ENCODE measurements at regions of chr1 and their contacts with region 1.

Region 1: GRCh38 chr1:93659822-93660503 is 21.7 kb downstream of the BCAR3 start:
- DNase-seq: no peak
- ATAC-seq: no peak
- H3K4me3 ChIP-seq: no peak overlapping the region
- H3K4me3 Mint-ChIP-seq: no peak overlapping the region
- H3K27ac ChIP-seq: no peak overlapping the region
- H3K27ac Mint-ChIP-seq: no peak overlapping the region
- H3K4me1 ChIP-seq: no peaks in the 10 kb centered on the region
- H3K4me1 Mint-ChIP-seq: no peaks in the 10 kb centered on the region
- H3K27me3 ChIP-seq: no peaks in the 10 kb centered on the region
- H3K27me3 Mint-ChIP-seq: no peaks in the 10 kb centered on the region
- CTCF ChIP-seq: no peak

Region 2: GRCh38 chr1:93620841-93621210 is 39.1 kb before region 1 on chr1:
- CTCF ChIA-PET with region 1: no interaction called
- POLR2A ChIA-PET with region 1: no interaction called
- intact Hi-C with region 1: no loop called
- DNase-seq: no peak
- ATAC-seq: no peak
- H3K4me3 ChIP-seq: no peak overlapping the region
- H3K4me3 Mint-ChIP-seq: no peak overlapping the region
- H3K27ac ChIP-seq: no peak overlapping the region
- H3K27ac Mint-ChIP-seq: no peak overlapping the region
- H3K4me1 ChIP-seq: no peaks in the 10 kb centered on the region
- H3K4me1 Mint-ChIP-seq: peaks cover 3% of the 10 kb centered on the region
- H3K27me3 ChIP-seq: no peaks in the 10 kb centered on the region
- H3K27me3 Mint-ChIP-seq: peaks cover 3% of the 10 kb centered on the region
- CTCF ChIP-seq: no peak

Region 3: GRCh38 chr1:93749894-93750301 is 89.9 kb after region 1 on chr1:
- CTCF ChIA-PET with region 1: no interaction called
- POLR2A ChIA-PET with region 1: no interaction called
- intact Hi-C with region 1: no loop called
- DNase-seq: peak in 1 of 9 experiments; percentile 23
- ATAC-seq: no peak
- H3K4me3 ChIP-seq: no peak overlapping the region
- H3K4me3 Mint-ChIP-seq: no peak overlapping the region
- H3K27ac ChIP-seq: peak overlapping the region in 1 of 2 experiments; percentile 42
- H3K27ac Mint-ChIP-seq: no peak overlapping the region
- H3K4me1 ChIP-seq: no peaks in the 10 kb centered on the region
- H3K4me1 Mint-ChIP-seq: peaks cover 10% of the 10 kb centered on the region
- H3K27me3 ChIP-seq: peaks cover 0 to 3% of the 10 kb centered on the region in 2 experiments
- H3K27me3 Mint-ChIP-seq: no peaks in the 10 kb centered on the region
- CTCF ChIP-seq: no peak

Region 4: GRCh38 chr1:93919780-93920179 is 259.8 kb after region 1 on chr1:
- CTCF ChIA-PET with region 1: no interaction called
- POLR2A ChIA-PET with region 1: no interaction called
- intact Hi-C with region 1: loop called in 1 of 2 experiments (anchors 10 kb)
- DNase-seq: no peak
- ATAC-seq: no peak
- H3K4me3 ChIP-seq: no peak overlapping the region
- H3K4me3 Mint-ChIP-seq: no peak overlapping the region
- H3K27ac ChIP-seq: no peak overlapping the region
- H3K27ac Mint-ChIP-seq: no peak overlapping the region
- H3K4me1 ChIP-seq: no peaks in the 10 kb centered on the region
- H3K4me1 Mint-ChIP-seq: no peaks in the 10 kb centered on the region
- H3K27me3 ChIP-seq: no peaks in the 10 kb centered on the region
- H3K27me3 Mint-ChIP-seq: no peaks in the 10 kb centered on the region
- CTCF ChIP-seq: no peak